B cell (primary cell): ENCODE measurements at regions of chr3 and their contacts with region 1.

Region 1: GRCh38 chr3:13884851-13885703 is 5.2 kb upstream of the WNT7A start:
- DNase-seq: peak; percentile 61
- ATAC-seq: peak; percentile 51
- H3K4me3 ChIP-seq: no peak overlapping the region
- H3K4me3 Mint-ChIP-seq: no peak overlapping the region
- H3K27ac ChIP-seq: no peak overlapping the region
- H3K27ac Mint-ChIP-seq: no peak overlapping the region
- H3K4me1 ChIP-seq: peaks cover 10 to 11% of the 10 kb centered on the region in 2 donors
- H3K4me1 Mint-ChIP-seq: no peaks in the 10 kb centered on the region
- H3K27me3 ChIP-seq: peaks cover 0 to 35% (median 19%) of the 10 kb centered on the region in 4 experiments
- H3K27me3 Mint-ChIP-seq: peaks cover 51% of the 10 kb centered on the region
- CTCF ChIP-seq: peak; percentile 71

Region 2: DNA sequence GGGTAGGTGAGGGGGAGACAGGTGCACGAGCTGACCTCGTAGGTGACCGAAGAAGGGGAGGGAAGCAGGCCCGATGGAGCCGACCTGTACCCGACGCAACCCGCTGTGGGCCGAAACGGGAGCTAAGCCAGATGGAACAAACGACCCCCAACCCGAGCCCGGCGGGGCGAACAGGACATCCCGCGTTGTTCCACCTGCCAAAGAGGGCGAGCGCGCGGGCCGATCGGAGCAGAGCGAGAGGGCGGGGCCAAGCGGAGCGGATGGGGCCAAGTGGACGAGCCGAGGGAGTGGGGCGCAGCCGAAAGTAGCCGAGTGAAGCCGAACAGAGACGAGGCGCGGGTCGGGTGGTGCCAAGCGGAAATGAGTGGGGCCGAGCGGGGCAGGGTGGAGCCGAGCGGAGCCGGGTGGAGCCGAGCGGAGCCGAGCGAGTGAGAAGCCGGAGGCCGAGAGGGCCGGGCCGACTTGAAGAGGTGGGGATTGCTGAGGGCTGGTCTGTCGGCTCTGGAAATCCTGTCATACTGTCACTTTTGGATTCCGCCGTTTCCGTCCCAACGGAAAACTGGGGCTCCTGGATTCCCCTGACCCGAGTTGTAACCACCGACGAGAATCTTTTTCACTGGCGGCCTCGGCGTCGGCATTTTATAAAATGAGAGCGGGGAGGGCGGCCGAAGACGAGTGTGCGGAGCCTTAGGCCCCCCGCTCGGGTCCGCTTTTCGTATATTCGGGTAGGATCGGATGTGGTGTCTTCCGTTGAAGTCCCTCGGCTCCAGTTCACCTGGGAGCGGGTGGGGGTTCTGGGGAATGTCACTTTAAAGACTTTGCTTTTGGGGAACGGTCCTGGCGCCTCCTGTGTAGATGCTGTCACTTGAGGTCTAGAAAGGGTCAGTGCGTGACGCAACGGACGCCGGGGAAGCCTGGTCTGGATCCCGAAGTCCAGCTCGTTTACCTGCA is 10.4 kb after region 1 on chr3:
- CTCF ChIA-PET with region 1: interaction called, 11 read pairs
- POLR2A ChIA-PET with region 1: no interaction called
- intact Hi-C with region 1: no loop called
- DNase-seq: peak; percentile 92
- ATAC-seq: peak; percentile 98
- H3K4me3 ChIP-seq: peak overlapping the region; percentile 32 to 75 (median 64)
- H3K4me3 Mint-ChIP-seq: peak overlapping the region; percentile 89
- H3K27ac ChIP-seq: peak overlapping the region in 1 of 2 donors; percentile 58
- H3K27ac Mint-ChIP-seq: peak overlapping the region; percentile 69
- H3K4me1 ChIP-seq: peaks cover 17 to 33% of the 10 kb centered on the region in 2 donors
- H3K4me1 Mint-ChIP-seq: peaks cover 30% of the 10 kb centered on the region
- H3K27me3 ChIP-seq: peaks cover 0 to 7% (median 0%) of the 10 kb centered on the region in 4 experiments
- H3K27me3 Mint-ChIP-seq: peaks cover 20% of the 10 kb centered on the region
- CTCF ChIP-seq: no peak

Region 3: DNA sequence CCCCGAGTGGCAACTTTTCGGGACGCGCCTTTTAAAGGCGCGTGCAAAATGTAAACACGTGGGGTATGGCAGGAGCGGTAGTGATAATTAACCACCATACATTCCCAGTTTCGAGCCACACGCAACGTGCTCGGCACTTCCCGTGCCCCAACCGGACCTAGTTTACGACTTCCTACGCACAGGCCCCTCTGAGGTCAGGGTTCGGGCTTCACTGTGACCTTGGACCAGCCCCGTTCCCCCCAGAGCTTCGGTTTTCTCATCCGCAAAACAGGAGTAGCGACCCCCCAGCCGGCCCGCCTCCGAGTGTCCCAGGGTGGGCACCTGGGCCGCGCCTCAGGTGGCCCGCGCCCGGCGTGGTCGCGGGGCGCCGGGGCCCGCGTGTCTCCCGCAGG is 239.1 kb after region 1 on chr3:
- CTCF ChIA-PET with region 1: no interaction called
- POLR2A ChIA-PET with region 1: no interaction called
- intact Hi-C with region 1: no loop called
- DNase-seq: no peak
- ATAC-seq: peak; percentile 21
- H3K4me3 ChIP-seq: peak overlapping the region; percentile 73 to 97 (median 85)
- H3K4me3 Mint-ChIP-seq: peak overlapping the region; percentile 97
- H3K27ac ChIP-seq: peak overlapping the region; percentile 61 to 89
- H3K27ac Mint-ChIP-seq: peak overlapping the region; percentile 92
- H3K4me1 ChIP-seq: peaks cover 24 to 32% of the 10 kb centered on the region in 2 donors
- H3K4me1 Mint-ChIP-seq: peaks cover 45% of the 10 kb centered on the region
- H3K27me3 ChIP-seq: no peaks in the 10 kb centered on the region
- H3K27me3 Mint-ChIP-seq: no peaks in the 10 kb centered on the region
- CTCF ChIP-seq: no peak